Cardiac septum (tissue), 1 donor: ENCODE measurements at regions of chr11 and their contacts with region 1.

Region 1: DNA sequence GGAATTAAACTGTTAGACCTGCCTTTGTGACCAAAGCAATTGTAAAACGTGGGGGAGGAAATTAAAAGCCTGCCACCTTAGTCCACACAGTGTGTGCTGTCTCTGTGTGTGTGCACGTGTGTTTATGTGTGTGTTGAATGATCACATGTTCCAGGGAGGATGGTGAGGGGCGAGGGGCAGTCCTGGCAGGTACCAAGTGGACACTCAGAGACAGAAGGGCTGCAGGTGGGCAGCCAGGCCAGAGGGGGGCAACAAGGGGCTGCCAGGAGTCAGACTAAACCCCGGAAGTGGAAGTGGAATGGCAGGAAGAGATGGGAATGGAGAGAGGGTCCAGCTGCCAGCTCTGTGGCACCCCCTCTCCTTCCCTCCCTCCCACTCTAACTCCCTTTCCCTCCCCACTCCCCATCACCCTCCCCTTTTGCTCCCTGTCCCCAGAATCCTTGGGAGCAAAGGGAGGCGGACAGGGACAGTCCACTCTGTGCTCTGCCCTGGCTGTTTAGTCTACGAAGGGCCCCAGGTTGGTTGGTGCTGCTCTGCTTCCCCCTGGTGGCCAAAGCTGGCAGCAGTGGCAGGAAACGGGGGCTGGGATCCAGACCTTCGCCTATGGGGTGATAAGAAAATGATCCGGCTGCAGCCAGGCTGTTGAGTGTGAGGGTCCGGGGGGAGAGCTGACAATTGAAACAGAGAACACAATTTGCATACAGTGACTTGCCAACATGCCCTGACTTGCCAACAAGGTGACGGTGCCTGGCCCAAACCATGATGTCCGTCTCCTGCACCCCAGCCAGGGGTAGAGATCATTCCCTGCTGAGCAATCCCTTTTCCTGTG is 24.4 kb downstream of the P2RY2 start:
- DNase-seq: peak; percentile 90

Region 2: GRCh38 chr11:72573072-72573854 is 669.2 kb before region 1 on chr11:
- intact Hi-C with region 1: no loop called
- DNase-seq: peak; percentile 36

Region 3: DNA sequence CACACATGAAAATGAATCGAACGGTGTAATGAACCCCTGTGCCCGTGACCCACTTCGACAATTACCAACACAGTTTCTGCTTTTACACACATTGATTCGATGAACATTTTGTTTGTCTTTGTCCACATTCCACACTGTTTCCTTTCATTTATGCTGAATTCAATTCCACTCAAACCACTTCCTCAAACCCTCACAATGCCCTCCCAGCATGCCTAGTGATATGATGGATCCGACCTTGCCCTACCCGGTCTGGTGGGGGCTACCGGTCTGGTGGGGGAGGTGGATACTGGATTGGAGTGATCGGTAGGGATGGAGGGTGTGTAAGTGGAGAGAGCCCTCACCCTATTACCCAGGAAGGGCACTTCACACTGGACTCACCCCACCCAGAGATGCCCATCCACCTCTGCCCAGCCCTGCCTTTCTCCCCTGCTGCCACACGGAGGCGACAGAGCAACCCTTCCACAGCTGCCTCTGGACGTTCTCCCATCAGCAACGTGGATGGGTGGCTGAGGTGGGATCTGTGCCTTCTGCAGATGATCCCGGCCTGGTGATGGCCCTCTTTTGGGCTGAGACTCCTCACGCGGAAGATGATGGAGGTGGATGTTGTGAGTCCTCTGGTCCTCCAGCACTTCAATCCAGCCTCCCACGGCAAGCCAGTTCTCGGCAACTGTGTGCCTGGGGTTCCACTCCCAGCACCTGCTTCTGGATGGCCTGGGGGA is 57.4 kb before region 1 on chr11:
- intact Hi-C with region 1: loop called (anchors 2 kb)
- DNase-seq: peak; percentile 91

Region 4: DNA sequence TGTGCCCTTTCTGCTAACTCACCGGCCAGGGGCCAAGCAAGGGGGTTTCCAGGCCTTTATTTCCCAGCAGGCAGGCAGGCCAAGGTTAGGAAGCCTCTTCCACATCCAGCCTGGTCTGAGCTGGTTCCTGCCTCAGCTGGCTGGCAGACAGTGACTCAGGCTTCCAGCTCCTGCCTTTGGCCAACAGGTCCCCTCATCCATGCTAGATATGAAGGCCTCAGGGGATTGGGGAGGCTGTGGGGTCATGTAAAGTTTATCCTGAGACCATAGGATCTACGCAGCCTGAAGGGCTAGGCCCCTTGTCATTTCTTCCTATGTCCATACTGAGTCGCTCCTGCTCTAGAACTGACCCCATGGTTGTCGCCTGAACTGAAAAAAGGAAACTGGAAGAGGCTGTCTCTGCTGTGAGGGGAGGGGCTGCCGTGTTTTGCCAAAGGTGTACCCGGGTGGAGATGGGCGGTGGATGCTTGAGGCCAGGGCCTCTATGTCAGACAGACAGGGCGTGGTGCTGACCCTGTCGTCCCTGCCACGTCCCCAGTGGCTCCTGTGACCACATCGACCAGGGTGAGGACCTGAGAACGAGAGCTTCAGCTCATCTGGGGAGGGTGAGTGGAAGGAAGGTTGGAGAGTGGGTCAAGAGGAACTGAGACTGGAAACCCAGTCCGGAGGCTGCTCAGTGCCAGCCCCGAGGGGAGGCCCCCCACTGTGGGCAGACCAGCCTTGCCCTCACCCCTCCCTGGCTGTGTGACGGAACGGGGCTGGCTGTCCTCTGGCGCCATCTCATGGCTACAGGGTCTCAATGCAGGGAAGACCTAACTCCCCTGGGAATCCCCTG is 46.6 kb after region 1 on chr11:
- intact Hi-C with region 1: loop called (anchors 5 kb)
- DNase-seq: peak; percentile 93